Right cardiac atrium (tissue), 5 donors: ENCODE measurements at regions of chr1 and their contacts with region 1.

Region 1: DNA sequence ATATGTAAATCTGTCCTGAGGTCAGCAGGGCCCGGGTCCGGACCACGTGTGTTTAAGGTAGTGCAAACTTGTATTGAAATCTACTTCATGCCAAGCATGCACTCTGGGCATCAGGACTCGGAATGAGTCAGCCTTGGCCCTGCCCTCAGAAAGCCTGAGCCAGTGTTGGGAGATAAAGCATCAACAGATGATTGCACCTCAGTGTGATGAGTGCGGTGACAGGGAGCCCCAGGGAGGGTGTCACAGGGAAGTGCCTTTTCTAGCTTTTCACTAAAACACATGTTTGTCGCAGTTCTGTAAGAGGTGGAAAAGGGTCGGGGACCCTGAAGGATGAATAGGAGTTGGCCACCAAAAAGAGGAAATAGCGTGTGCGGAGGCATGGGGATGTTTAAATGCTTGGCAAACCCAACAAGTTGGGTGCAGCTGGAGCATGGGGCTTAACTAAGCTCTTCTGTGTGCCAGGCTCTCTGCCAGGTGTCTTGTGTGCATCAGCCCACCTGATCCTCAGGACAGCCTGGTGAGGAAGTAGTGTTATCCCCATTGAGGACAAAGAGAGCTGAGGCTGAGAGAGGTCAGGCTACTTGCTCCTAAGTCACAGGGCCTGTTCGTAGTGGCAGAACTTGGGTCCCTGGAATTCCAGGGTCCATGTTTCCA is 48.2 kb upstream of the EPB41 start:
- DNase-seq: no peak
- ATAC-seq: no peak
- H3K4me3 ChIP-seq: no peak overlapping the region
- H3K27ac ChIP-seq: no peak overlapping the region
- H3K4me1 ChIP-seq: no peaks in the 10 kb centered on the region
- H3K27me3 ChIP-seq: no peaks in the 10 kb centered on the region

Region 2: DNA sequence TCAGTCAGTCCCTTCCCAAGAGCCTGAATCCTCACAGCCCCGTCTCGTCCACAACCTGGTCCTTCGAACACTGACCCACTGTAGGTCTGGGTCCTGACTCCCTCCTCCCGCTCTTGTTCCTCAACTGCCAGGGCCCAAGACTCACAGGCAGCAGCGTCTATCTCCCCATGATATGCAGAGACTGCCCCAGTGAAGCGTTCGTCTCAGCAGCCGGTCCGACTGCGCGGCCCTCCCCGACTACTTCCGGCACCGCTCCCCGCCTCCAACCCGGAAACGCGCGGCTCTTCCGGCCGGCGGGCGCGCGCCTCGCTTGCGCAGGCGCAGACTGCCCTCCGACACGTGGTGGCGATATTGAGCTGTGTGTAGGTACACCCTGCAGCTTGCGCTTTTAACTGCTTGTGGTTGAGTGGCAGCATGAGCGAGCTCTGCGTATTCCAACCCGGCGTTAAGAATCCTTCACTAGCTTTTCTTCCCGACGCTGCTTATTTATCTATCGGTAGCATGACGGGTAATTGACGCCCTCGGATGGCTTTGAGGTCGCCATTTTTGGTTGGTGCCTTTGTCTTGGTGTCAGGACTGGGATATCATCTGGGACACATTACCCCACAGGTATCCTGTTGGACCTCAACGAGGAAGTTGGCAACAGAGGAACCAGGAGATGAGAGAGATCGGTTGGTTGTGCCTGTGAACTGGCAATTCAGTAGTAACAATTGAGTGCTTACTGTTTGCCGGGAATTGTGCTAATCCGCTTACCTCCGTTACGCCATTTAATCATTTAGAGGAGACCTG is 223.1 kb before region 1 on chr1 and contains the start of gene TAF12:
- intact Hi-C with region 1: no loop called
- DNase-seq: peak; percentile 91 to 97 (median 97)
- ATAC-seq: peak; percentile 96
- H3K4me3 ChIP-seq: peak within 1 kb of the TSS; percentile 72
- H3K27ac ChIP-seq: peak within 1 kb of the TSS; percentile 89
- H3K4me1 ChIP-seq: no peaks in the 10 kb centered on the region
- H3K27me3 ChIP-seq: no peaks in the 10 kb centered on the region
- total RNA-seq, gene TAF12: 17.2 to 23.7 (median 21.9) TPM

Region 3: GRCh38 chr1:28804071-28804470 is 62.1 kb before region 1 on chr1:
- intact Hi-C with region 1: loop called in 1 of 4 experiments (anchors 5 kb)
- DNase-seq: no peak
- ATAC-seq: no peak
- H3K4me3 ChIP-seq: no peak overlapping the region
- H3K27ac ChIP-seq: no peak overlapping the region
- H3K4me1 ChIP-seq: no peaks in the 10 kb centered on the region
- H3K27me3 ChIP-seq: no peaks in the 10 kb centered on the region

Region 4: DNA sequence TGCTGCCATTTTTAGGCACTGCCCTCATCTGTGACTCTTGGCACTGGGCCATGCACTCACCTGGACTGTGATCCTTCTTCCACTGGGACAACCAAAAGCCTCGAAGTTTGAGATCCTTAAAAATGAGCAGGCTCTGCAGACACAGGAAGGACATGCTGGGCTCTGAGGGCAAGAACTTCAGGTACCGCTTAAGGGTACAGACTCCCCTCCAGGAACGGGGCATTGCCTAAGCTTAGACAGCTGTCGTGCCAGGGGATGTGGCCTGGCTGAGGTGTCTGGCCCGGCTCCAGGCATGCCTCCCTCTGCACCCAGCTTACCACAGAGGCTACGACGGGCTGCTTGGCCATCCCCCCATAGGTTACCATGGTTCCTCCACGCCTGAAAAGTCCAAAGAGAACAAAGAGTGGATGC is 329.8 kb after region 1 on chr1:
- intact Hi-C with region 1: no loop called
- DNase-seq: no peak
- ATAC-seq: no peak
- H3K4me3 ChIP-seq: no peak overlapping the region
- H3K27ac ChIP-seq: no peak overlapping the region
- H3K4me1 ChIP-seq: peaks cover 2% of the 10 kb centered on the region
- H3K27me3 ChIP-seq: no peaks in the 10 kb centered on the region